Activated CD4-positive, alpha-beta T cell treated with anti-CD3 and anti-CD28 coated beads for 36 hours (primary cell): ENCODE measurements at regions of chr5 and their contacts with region 1.

Region 1: GRCh38 chr5:148730943-148731861 is 76.9 kb upstream of the HTR4 start:
- DNase-seq: peak; percentile 85
- ATAC-seq: peak; percentile 94
- H3K4me3 Mint-ChIP-seq: no peak overlapping the region
- H3K27ac Mint-ChIP-seq: no peak overlapping the region
- H3K4me1 Mint-ChIP-seq: peaks cover 7% of the 10 kb centered on the region
- H3K27me3 Mint-ChIP-seq: peaks cover 1% of the 10 kb centered on the region

Region 2: GRCh38 chr5:147887024-147887627 is 844.1 kb before region 1 on chr5:
- CTCF ChIA-PET with region 1: no interaction called
- POLR2A ChIA-PET with region 1: no interaction called
- intact Hi-C with region 1: loop called in 1 of 2 experiments (anchors 1 kb)
- DNase-seq: no peak
- ATAC-seq: no peak
- H3K4me3 Mint-ChIP-seq: no peak overlapping the region
- H3K27ac Mint-ChIP-seq: no peak overlapping the region
- H3K4me1 Mint-ChIP-seq: no peaks in the 10 kb centered on the region
- H3K27me3 Mint-ChIP-seq: peaks cover 5% of the 10 kb centered on the region

Region 3: DNA sequence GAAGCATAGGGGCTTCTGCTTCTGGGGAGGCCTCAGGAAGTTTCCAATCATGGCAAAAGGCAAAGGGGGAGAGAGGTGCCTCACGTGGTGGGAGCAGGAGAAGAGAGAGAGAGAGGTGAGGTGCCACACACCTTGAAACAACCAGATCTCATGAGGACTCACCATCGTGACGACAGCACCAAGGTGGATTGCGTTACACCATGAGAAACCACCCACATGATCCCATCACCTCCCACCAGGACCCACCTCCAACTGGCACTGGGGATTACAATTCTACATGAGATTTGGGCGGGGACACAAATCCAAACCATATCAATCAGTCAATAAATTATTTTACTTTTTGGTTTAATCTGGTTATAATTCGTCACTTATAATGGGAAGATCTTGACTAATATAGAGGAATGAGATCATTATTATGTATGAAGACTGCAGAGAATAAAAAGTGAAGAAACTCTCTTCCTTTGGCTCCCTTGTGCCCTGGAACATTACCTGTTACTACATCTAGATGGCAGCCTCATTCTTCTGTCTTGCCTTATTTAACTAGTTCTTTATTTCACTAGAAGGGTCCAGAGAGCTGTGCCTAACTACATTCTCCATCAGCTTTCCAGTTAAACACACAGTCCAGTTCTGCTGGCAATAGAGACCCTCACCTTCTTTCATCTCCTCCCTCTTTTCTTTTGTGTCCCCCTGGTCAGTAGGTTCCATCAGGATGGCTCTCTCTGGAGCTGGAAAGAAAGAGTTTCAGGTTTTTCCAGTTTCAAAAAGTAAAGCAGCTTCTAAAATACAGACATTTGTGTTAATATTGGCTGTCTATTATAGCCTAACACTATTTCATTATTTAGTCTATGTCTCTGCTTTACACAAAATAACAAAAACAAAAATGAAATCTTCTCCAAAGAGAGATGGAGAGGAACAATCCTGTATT is 440.7 kb before region 1 on chr5:
- CTCF ChIA-PET with region 1: interaction called, 6 read pairs
- POLR2A ChIA-PET with region 1: no interaction called
- intact Hi-C with region 1: loop called in 1 of 2 experiments (anchors 1 kb)
- DNase-seq: no peak
- ATAC-seq: no peak
- H3K4me3 Mint-ChIP-seq: no peak overlapping the region
- H3K27ac Mint-ChIP-seq: no peak overlapping the region
- H3K4me1 Mint-ChIP-seq: no peaks in the 10 kb centered on the region
- H3K27me3 Mint-ChIP-seq: peaks cover 6% of the 10 kb centered on the region

Region 4: DNA sequence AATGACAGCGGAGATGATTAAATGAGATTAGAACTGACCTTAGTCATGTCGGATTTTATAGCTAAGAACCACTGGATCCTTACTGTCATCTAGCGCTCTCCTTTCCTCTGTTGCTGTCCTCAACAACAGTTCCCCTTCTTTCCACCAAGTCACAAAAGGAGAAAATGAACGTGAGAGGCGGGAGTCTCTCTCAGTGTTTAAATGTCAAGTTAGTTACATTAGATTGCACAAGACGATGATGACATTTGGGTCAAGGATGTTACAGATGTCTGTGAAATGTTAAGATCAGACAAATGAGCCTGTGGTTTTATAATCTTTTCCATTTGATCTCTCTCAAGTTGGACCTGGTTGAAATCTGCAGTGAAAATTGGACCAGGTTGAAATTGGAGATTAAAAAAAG is 294.0 kb before region 1 on chr5:
- CTCF ChIA-PET with region 1: interaction called, 198 read pairs
- POLR2A ChIA-PET with region 1: no interaction called
- intact Hi-C with region 1: no loop called
- DNase-seq: no peak
- ATAC-seq: peak; percentile 78
- H3K4me3 Mint-ChIP-seq: peak overlapping the region; percentile 56
- H3K27ac Mint-ChIP-seq: peak overlapping the region; percentile 89
- H3K4me1 Mint-ChIP-seq: peaks cover 7% of the 10 kb centered on the region
- H3K27me3 Mint-ChIP-seq: no peaks in the 10 kb centered on the region

Region 5: GRCh38 chr5:148491015-148491792 is 240.0 kb before region 1 on chr5:
- CTCF ChIA-PET with region 1: interaction called, 10 read pairs
- POLR2A ChIA-PET with region 1: no interaction called
- intact Hi-C with region 1: no loop called
- DNase-seq: no peak
- ATAC-seq: no peak
- H3K4me3 Mint-ChIP-seq: no peak overlapping the region
- H3K27ac Mint-ChIP-seq: no peak overlapping the region
- H3K4me1 Mint-ChIP-seq: no peaks in the 10 kb centered on the region
- H3K27me3 Mint-ChIP-seq: peaks cover 20% of the 10 kb centered on the region

Region 6: GRCh38 chr5:148957591-148958202 is 226.5 kb after region 1 on chr5:
- CTCF ChIA-PET with region 1: interaction called, 173 read pairs
- POLR2A ChIA-PET with region 1: no interaction called
- intact Hi-C with region 1: loop called in 1 of 2 experiments (anchors 1 kb)
- DNase-seq: peak; percentile 68
- ATAC-seq: peak; percentile 57
- H3K4me3 Mint-ChIP-seq: no peak overlapping the region
- H3K27ac Mint-ChIP-seq: no peak overlapping the region
- H3K4me1 Mint-ChIP-seq: no peaks in the 10 kb centered on the region
- H3K27me3 Mint-ChIP-seq: no peaks in the 10 kb centered on the region

Region 7: GRCh38 chr5:149114403-149115312 is 383.5 kb after region 1 on chr5:
- CTCF ChIA-PET with region 1: interaction called, 39 read pairs
- POLR2A ChIA-PET with region 1: no interaction called
- intact Hi-C with region 1: loop called (anchors 1 kb)
- DNase-seq: peak; percentile 68
- ATAC-seq: peak; percentile 78
- H3K4me3 Mint-ChIP-seq: no peak overlapping the region
- H3K27ac Mint-ChIP-seq: no peak overlapping the region
- H3K4me1 Mint-ChIP-seq: peaks cover 3% of the 10 kb centered on the region
- H3K27me3 Mint-ChIP-seq: peaks cover 18% of the 10 kb centered on the region